ENCODE measurements at regions of chr11 and their contacts with region 1.

Region 1: DNA sequence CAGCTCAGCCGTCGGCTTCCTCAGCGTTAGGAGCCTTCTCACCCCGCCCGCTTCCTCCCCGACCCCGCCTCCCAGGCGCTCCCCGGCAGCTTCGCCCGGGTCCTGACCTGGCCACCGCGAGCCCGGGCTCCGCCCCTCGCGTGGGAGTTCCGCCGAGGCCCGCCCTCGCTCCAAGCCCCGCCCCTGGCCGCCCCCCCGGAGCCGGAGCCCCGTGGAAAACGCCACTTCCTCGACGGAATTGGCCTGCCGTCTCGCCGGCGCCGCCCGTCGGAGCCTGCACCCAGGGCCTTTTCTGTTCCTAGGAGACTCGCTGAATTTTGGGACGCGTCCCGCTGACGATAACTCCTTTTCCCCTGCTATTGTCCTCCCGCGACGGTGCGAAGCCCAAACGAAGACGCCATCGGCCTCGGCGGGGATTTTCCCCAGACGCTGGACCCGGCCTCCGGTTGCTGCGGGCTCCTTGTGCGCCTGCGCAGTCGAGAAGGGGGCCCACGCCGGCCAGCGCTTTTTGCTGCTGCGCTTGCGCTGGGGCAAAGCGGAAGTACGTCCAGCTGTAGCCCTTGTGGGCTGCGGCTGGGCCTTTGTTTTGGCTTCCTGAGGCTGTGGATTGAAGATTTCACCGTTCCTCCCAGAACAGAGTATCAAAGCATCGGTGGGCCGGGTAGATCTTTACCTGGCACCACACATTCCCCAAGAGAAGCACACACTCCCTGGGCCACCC is 10.0 kb downstream of the RELA start:
- DNase-seq: peak; percentile 71
- ATAC-seq: peak; percentile 78
- H3K4me3 ChIP-seq: peak overlapping the region; percentile 51 to 62
- H3K27ac ChIP-seq: peak overlapping the region; percentile 96
- H3K4me1 ChIP-seq: peaks cover 36 to 53% of the 10 kb centered on the region in 2 experiments
- H3K27me3 ChIP-seq: no peaks in the 10 kb centered on the region
- CTCF ChIP-seq: no peak
- POLR2A ChIP-seq: no peak
- RAD21 ChIP-seq: no peak

Region 2: DNA sequence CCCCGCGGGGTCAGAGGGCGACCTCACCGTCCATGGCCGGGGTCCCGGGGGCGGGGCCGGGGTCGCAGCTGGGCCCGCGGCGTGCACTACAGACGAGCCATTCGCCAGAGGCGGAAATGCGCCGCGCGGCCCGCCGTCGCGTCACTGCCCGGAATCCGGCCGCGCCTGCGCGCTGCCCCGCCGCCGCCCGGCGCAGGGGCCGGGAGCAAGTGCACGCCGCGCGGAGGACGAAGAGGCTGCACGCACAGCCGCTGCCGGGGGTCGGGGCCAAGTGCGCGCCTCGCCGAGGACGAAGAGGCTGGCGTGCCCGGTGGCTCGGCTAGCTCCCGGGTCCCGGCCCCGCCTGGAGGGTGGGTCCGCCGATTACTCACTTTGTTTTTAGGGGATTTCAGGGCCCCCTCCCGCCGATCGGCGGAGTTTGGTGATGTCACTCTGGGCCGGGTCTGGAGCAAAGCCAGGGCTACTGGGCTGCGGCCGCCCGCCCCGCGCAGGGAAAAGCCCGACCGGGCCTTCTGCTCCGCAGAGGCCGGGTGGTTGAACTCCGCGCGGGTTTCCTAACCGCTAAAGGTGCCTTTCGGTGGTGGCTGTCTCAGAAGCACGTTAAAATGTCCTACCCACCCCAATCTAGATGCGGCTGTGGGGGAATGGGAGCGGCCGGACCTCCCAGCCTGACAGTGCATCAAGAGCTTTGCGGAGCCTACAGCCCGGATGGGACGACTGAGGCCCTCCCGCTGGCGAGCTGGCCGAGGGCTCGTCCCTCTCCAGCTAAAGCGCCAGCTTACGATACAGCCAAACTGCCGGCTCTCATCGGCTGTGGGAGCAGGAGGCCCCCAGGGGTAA is 10.3 kb after region 1 on chr11 and contains the start of gene RELA:
- CTCF ChIA-PET with region 1: no interaction called
- POLR2A ChIA-PET with region 1: interaction called, 24 read pairs
- RAD21 ChIA-PET with region 1: no interaction called
- intact Hi-C with region 1: no loop called
- DNase-seq: peak; percentile 84
- ATAC-seq: peak; percentile 88
- H3K4me3 ChIP-seq: peak within 1 kb of the TSS; percentile 86 to 100
- H3K27ac ChIP-seq: peak within 1 kb of the TSS; percentile 95
- H3K4me1 ChIP-seq: peaks cover 17 to 24% of the 10 kb centered on the region in 2 experiments
- H3K27me3 ChIP-seq: no peaks in the 10 kb centered on the region
- CTCF ChIP-seq: no peak
- POLR2A ChIP-seq: peak; percentile 82
- RAD21 ChIP-seq: no peak
- total RNA-seq, gene RELA: 78.5 TPM

Measured in HCT116 (cell line).